Endothelial cell of umbilical vein (primary cell): ENCODE measurements at regions of chr17 and their contacts with region 1.

Region 1: GRCh38 chr17:10646392-10646990 is 10.6 kb downstream of the MYH3 start:
- DNase-seq: peak; percentile 64
- H3K4me3 ChIP-seq: no peak overlapping the region
- H3K27ac ChIP-seq: no peak overlapping the region
- H3K4me1 ChIP-seq: no peaks in the 10 kb centered on the region
- H3K27me3 ChIP-seq: no peaks in the 10 kb centered on the region
- CTCF ChIP-seq: peak; percentile 77 to 86
- POLR2A ChIP-seq: no peak

Region 2: DNA sequence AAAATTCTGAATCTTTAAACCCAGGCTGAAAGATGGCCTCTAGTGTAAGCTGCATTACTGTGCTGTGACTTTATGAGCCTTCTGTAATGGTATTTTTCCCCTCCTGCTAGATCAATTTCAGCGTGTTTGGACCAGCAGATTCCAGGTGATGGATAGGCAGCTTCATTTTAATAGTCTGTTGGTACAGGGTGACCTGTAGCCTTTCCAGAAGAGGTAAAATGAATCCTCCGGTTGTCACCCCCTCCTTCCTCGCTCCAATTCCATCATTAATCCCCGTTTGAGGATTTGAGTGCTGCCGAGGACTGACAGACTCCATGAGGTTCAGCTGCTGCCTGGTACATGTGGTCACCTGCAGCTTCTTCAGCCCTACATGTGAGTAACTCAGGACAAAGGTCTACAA is 38.2 kb before region 1 on chr17:
- CTCF ChIA-PET with region 1: no interaction called
- POLR2A ChIA-PET with region 1: no interaction called
- dilution Hi-C with region 1: no loop called
- intact Hi-C with region 1: no loop called
- DNase-seq: no peak
- H3K4me3 ChIP-seq: no peak overlapping the region
- H3K27ac ChIP-seq: no peak overlapping the region
- H3K4me1 ChIP-seq: no peaks in the 10 kb centered on the region
- H3K27me3 ChIP-seq: no peaks in the 10 kb centered on the region
- CTCF ChIP-seq: no peak
- POLR2A ChIP-seq: no peak

Region 3: DNA sequence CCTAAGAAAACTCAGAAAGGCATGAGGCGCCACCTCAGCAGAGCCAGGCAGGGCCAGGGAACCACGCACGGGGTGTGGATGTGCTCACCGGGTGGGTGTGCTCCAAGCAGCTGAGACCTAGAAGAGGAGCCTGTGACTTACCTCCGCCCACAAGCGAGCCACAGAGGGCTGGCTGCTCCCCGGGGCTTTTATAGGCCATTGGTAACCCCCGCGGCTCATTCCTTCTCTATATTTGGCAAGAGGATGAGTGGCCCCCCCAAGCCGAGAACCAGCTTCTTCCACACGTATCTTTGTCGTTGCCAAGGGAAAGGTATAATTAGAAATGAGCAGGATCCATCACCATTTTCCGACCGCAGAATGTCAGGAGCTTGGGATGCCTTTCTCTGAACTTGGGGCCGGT is 10.7 kb after region 1 on chr17 and contains the start of gene MYH3:
- CTCF ChIA-PET with region 1: interaction called, 17 read pairs
- POLR2A ChIA-PET with region 1: no interaction called
- dilution Hi-C with region 1: no loop called
- intact Hi-C with region 1: no loop called
- DNase-seq: no peak
- H3K4me3 ChIP-seq: no peak within 1 kb of the TSS
- H3K27ac ChIP-seq: no peak within 1 kb of the TSS
- H3K4me1 ChIP-seq: no peaks in the 10 kb centered on the region
- H3K27me3 ChIP-seq: no peaks in the 10 kb centered on the region
- CTCF ChIP-seq: no peak
- POLR2A ChIP-seq: no peak
- total RNA-seq, gene MYH3: 0.73 and 0.78 TPM in 2 replicates

Region 4: DNA sequence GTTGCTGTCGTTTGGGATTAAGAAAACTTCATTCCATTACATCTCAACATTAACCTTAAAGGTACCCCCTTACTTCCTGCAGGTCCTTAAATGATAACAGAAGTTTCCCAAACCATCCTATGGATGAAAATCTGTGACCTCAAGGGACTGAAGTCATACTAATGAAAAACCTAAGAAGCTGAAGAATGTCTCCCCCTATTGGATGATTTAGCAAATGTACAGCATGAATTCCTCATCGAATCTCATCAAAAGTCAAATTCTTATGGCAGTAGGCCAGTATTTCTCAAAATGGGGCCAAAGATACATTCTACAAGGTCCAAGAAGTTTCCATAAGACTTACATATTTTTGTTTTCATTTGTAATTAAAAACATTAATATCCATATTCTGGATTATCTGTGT is 37.4 kb after region 1 on chr17:
- CTCF ChIA-PET with region 1: interaction called, 29 read pairs
- POLR2A ChIA-PET with region 1: no interaction called
- dilution Hi-C with region 1: no loop called
- intact Hi-C with region 1: loop called (anchors 1 kb)
- DNase-seq: peak; percentile 25
- H3K4me3 ChIP-seq: no peak overlapping the region
- H3K27ac ChIP-seq: no peak overlapping the region
- H3K4me1 ChIP-seq: no peaks in the 10 kb centered on the region
- H3K27me3 ChIP-seq: no peaks in the 10 kb centered on the region
- CTCF ChIP-seq: peak; percentile 31 to 42
- POLR2A ChIP-seq: no peak

Region 5: DNA sequence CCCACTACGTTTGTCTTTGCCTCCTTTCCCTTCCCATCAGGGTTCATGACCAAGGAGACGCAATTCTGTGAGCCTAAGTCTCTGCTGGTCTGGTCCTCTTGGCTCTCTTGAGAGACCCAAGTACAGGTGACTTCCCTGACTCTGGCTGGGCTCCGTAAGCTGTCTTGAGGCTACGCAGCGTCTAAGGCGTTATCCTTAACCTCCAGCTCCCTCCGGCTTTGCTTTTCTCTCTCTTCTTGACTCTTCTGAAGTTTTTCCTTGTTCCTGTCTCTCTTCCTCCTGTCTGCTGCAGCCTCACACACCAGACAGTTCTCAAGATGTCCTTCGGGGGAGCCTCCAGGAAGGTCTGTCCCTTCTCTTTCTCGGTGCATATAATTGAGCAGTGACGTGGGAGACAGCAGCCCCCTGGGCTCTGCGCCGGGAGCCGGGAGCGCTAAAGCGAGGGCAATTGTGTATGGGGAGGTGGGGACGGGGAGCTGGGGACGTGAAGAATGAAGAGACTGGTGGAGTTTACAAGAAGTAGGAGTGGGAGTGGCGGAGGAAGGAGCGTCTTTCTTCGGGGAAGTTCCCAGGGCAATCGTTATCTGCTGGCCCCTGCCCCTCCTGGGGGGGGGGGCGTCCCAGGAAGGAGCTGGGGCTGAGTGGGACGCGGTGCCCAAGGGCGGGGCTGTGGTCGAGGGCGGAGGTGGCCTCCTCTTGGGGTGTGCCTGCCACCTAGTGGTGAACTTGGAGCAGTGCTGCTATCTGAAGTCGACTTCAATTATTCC is 198.3 kb after region 1 on chr17:
- CTCF ChIA-PET with region 1: interaction called, 88 read pairs
- POLR2A ChIA-PET with region 1: interaction called, 4 read pairs
- dilution Hi-C with region 1: no loop called
- intact Hi-C with region 1: loop called (anchors 1 kb)
- DNase-seq: peak; percentile 56
- H3K4me3 ChIP-seq: peak overlapping the region in 1 of 3 experiments; percentile 33
- H3K27ac ChIP-seq: no peak overlapping the region
- H3K4me1 ChIP-seq: no peaks in the 10 kb centered on the region
- H3K27me3 ChIP-seq: peaks cover 0 to 4% of the 10 kb centered on the region in 2 experiments
- CTCF ChIP-seq: peak; percentile 73 to 88
- POLR2A ChIP-seq: no peak

Region 6: DNA sequence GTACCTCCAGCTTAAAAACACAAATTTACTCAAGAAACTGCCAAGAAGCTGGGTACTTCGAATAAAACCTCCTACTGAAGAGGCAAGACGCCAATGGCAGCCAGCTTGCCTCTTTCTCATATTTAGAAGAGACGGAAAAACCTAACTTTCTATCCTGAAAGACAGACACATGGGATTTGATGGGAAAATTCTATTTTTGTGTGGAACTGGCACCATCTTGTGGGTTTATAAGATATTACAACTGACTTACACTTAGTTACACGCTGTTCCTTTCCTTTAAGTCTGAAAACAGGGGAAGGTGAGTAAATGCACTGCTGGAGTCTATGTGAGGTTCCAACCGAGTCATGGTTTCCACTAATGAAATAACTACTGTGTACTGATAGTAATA is 1340.4 kb after region 1 on chr17:
- CTCF ChIA-PET with region 1: interaction called, 35 read pairs
- POLR2A ChIA-PET with region 1: no interaction called
- dilution Hi-C with region 1: no loop called
- intact Hi-C with region 1: loop called (anchors 10 kb)
- DNase-seq: peak; percentile 72
- H3K4me3 ChIP-seq: no peak overlapping the region
- H3K27ac ChIP-seq: no peak overlapping the region
- H3K4me1 ChIP-seq: no peaks in the 10 kb centered on the region
- H3K27me3 ChIP-seq: no peaks in the 10 kb centered on the region
- CTCF ChIP-seq: peak; percentile 30 to 35
- POLR2A ChIP-seq: no peak